Naive thymus-derived CD4-positive, alpha-beta T cell (primary cell): ENCODE measurements at regions of chr17 and their contacts with region 1.

Region 1: GRCh38 chr17:48543107-48543853 is 1.6 kb downstream of the HOXB2 start:
- DNase-seq: peak in 8 of 9 donors; percentile 51 to 71 (median 60)
- ATAC-seq: peak; percentile 67
- H3K4me3 ChIP-seq: peak overlapping the region; percentile 80
- H3K4me3 Mint-ChIP-seq: peak overlapping the region; percentile 94 to 100 (median 98)
- H3K27ac ChIP-seq: peak overlapping the region; percentile 90
- H3K27ac Mint-ChIP-seq: peak overlapping the region; percentile 95 to 100 (median 99)
- H3K4me1 ChIP-seq: peaks cover 0 to 31% of the 10 kb centered on the region in 2 donors
- H3K4me1 Mint-ChIP-seq: peaks cover 20 to 72% (median 56%) of the 10 kb centered on the region in 7 donors
- H3K27me3 ChIP-seq: no peaks in the 10 kb centered on the region
- H3K27me3 Mint-ChIP-seq: peaks cover 0 to 23% (median 10%) of the 10 kb centered on the region in 5 donors

Region 2: GRCh38 chr17:48429638-48430586 is 113.4 kb before region 1 on chr17 and contains the start of gene SKAP1:
- CTCF ChIA-PET with region 1: no interaction called
- POLR2A ChIA-PET with region 1: no interaction called
- intact Hi-C with region 1: loop called (anchors 5 kb)
- DNase-seq: peak; percentile 52 to 80 (median 62)
- ATAC-seq: peak; percentile 84
- H3K4me3 ChIP-seq: peak within 1 kb of the TSS; percentile 92
- H3K4me3 Mint-ChIP-seq: peak within 1 kb of the TSS; percentile 90 to 100 (median 98)
- H3K27ac ChIP-seq: peak within 1 kb of the TSS; percentile 97
- H3K27ac Mint-ChIP-seq: peak within 1 kb of the TSS; percentile 91 to 99 (median 98)
- H3K4me1 ChIP-seq: peaks cover 36 to 58% of the 10 kb centered on the region in 2 donors
- H3K4me1 Mint-ChIP-seq: peaks cover 50 to 93% (median 82%) of the 10 kb centered on the region in 7 donors
- H3K27me3 ChIP-seq: no peaks in the 10 kb centered on the region
- H3K27me3 Mint-ChIP-seq: no peaks in the 10 kb centered on the region
- total RNA-seq, gene SKAP1: 99.3 to 117 (median 109) TPM

Region 3: GRCh38 chr17:48492401-48493298 is 50.6 kb before region 1 on chr17:
- CTCF ChIA-PET with region 1: interaction called, 7 read pairs
- POLR2A ChIA-PET with region 1: interaction called, 12 read pairs
- intact Hi-C with region 1: loop called in 1 of 2 experiments (anchors 5 kb)
- DNase-seq: peak; percentile 38 to 73 (median 58)
- ATAC-seq: peak; percentile 95
- H3K4me3 ChIP-seq: peak overlapping the region; percentile 54
- H3K4me3 Mint-ChIP-seq: peak overlapping the region; percentile 6 to 79 (median 58)
- H3K27ac ChIP-seq: no peak overlapping the region
- H3K27ac Mint-ChIP-seq: peak overlapping the region in 1 of 9 donors; percentile 88
- H3K4me1 ChIP-seq: peaks cover 6 to 7% of the 10 kb centered on the region in 2 donors
- H3K4me1 Mint-ChIP-seq: peaks cover 0 to 58% (median 7%) of the 10 kb centered on the region in 7 donors
- H3K27me3 ChIP-seq: no peaks in the 10 kb centered on the region
- H3K27me3 Mint-ChIP-seq: peaks cover 6 to 26% (median 16%) of the 10 kb centered on the region in 5 donors

Region 4: DNA sequence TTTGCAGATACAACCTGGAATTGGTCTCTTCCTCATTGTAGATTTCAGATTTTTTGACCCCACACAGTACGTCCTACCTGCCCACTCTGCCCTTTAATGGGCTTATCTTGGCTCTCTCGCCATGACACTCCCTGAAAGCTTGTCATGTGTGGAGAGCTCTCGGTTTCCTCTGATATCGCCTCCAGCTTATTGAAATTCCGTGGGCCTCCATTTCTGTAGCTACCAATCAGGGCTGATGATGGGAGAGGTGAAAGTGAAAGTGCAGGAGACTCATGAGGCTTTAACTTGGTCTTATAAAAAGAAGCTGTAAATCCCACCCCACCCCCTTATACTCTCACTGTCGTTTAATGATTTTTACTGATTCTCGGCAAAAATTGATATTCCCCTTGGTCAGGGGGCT is 30.2 kb before region 1 on chr17:
- CTCF ChIA-PET with region 1: no interaction called
- POLR2A ChIA-PET with region 1: interaction called, 11 read pairs
- intact Hi-C with region 1: loop called (anchors 1 to 2 kb)
- DNase-seq: peak in 6 of 9 donors; percentile 24 to 44 (median 36)
- ATAC-seq: peak; percentile 74
- H3K4me3 ChIP-seq: peak overlapping the region; percentile 42
- H3K4me3 Mint-ChIP-seq: peak overlapping the region in 9 of 10 donors; percentile 70 to 89 (median 84)
- H3K27ac ChIP-seq: no peak overlapping the region
- H3K27ac Mint-ChIP-seq: peak overlapping the region; percentile 52 to 93 (median 85)
- H3K4me1 ChIP-seq: no peaks in the 10 kb centered on the region
- H3K4me1 Mint-ChIP-seq: peaks cover 6 to 65% (median 24%) of the 10 kb centered on the region in 7 donors
- H3K27me3 ChIP-seq: no peaks in the 10 kb centered on the region
- H3K27me3 Mint-ChIP-seq: peaks cover 0 to 49% (median 43%) of the 10 kb centered on the region in 5 donors

Region 5: DNA sequence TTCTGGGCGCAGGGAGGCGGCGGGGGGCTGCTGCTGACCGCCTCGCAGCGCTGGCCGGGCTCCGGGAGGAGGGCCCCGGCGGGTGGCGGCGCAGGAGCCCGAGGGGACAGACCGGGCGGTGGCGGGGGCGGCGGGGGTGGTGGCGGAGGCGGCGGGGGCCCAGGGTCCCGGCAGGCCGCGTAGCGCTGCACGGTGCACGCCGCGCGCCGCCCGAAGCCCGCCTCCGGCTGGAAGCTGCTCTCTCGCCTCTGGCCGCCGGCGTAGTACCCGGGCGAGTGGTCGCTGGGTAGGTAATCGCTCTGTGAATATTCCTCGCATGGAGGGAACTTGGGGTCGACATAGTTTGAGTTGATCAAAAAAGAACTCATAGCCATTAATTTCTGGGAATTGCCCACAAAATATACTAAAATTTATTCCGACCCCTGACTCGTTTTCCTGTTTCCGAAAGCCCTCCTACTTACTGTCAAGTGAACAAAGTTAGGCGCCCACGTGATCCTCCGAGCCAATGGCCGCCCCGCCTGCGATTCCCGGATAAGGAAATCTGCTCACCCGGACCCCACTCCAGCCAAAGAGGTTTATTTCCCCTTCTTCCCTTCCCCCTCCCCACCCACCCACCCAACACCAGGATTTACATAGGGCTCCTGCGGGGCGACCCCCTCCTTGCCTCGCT is 34.8 kb after region 1 on chr17 and contains the start of gene HOXB4:
- CTCF ChIA-PET with region 1: interaction called, 3 read pairs
- POLR2A ChIA-PET with region 1: interaction called, 20 read pairs
- intact Hi-C with region 1: loop called (anchors 1 kb)
- DNase-seq: peak in 6 of 9 donors; percentile 51 to 74 (median 57)
- ATAC-seq: peak; percentile 83
- H3K4me3 ChIP-seq: peak within 1 kb of the TSS; percentile 78
- H3K4me3 Mint-ChIP-seq: peak within 1 kb of the TSS; percentile 88 to 94 (median 90)
- H3K27ac ChIP-seq: no peak within 1 kb of the TSS
- H3K27ac Mint-ChIP-seq: peak within 1 kb of the TSS; percentile 26 to 89 (median 66)
- H3K4me1 ChIP-seq: peaks cover 15 to 27% of the 10 kb centered on the region in 2 donors
- H3K4me1 Mint-ChIP-seq: peaks cover 12 to 62% (median 52%) of the 10 kb centered on the region in 7 donors
- H3K27me3 ChIP-seq: peaks cover 6 to 36% of the 10 kb centered on the region in 2 donors
- H3K27me3 Mint-ChIP-seq: peaks cover 44 to 70% (median 49%) of the 10 kb centered on the region in 5 donors
- total RNA-seq, gene HOXB4: 0.34 to 7.9 (median 2.4) TPM